GM12878 (cell line): ENCODE measurements at regions of chr1 and their contacts with region 1.

Region 1: GRCh38 chr1:15847100-15847892 is at the start of gene SPEN:
- DNase-seq: peak; percentile 82
- ATAC-seq: peak; percentile 80
- H3K4me3 ChIP-seq: peak within 1 kb of the TSS; percentile 94
- H3K27ac ChIP-seq: peak within 1 kb of the TSS; percentile 87
- H3K4me1 ChIP-seq: peaks cover 4% of the 10 kb centered on the region
- H3K27me3 ChIP-seq: no peaks in the 10 kb centered on the region
- CTCF ChIP-seq: 0 out of 6 replicates have a peak, but pooled peaks of 1 of the 3 experiments have one; percentile 4
- EP300 ChIP-seq: no peak
- POLR2A ChIP-seq: peak; percentile 83
- RAD21 ChIP-seq: no peak
- polyA plus RNA-seq, gene SPEN: 5.2 to 12.9 TPM

Region 2: GRCh38 chr1:15526490-15527339 is 320.6 kb before region 1 on chr1 and contains the start of gene DNAJC16:
- CTCF ChIA-PET with region 1: no interaction called
- POLR2A ChIA-PET with region 1: no interaction called
- RAD21 ChIA-PET with region 1: interaction called, 4 read pairs
- SMC1A ChIA-PET with region 1: no interaction called
- in situ Hi-C with region 1: no loop called
- intact Hi-C with region 1: loop called (anchors 10 kb)
- DNase-seq: peak; percentile 100
- ATAC-seq: peak; percentile 70
- H3K4me3 ChIP-seq: peak within 1 kb of the TSS; percentile 93
- H3K27ac ChIP-seq: peak within 1 kb of the TSS; percentile 65
- H3K4me1 ChIP-seq: peaks cover 9% of the 10 kb centered on the region; the same call in 1 of the 2 replicates
- H3K27me3 ChIP-seq: no peaks in the 10 kb centered on the region
- CTCF ChIP-seq: peak in 2 of 3 experiments; percentile 9 to 39; a peak in 2 of 6 replicates
- EP300 ChIP-seq: peak in 1 of 2 experiments; percentile 24; a peak in 1 of 4 replicates
- POLR2A ChIP-seq: peak; percentile 83
- RAD21 ChIP-seq: no peak
- polyA plus RNA-seq, gene DNAJC16: 2.4 to 4.4 TPM

Region 3: GRCh38 chr1:15765495-15766194 is 81.7 kb before region 1 on chr1:
- CTCF ChIA-PET with region 1: no interaction called
- POLR2A ChIA-PET with region 1: no interaction called
- RAD21 ChIA-PET with region 1: no interaction called
- SMC1A ChIA-PET with region 1: no interaction called
- in situ Hi-C with region 1: no loop called
- intact Hi-C with region 1: no loop called
- DNase-seq: no peak
- ATAC-seq: no peak; the same call in none of the 3 replicates
- H3K4me3 ChIP-seq: no peak overlapping the region
- H3K27ac ChIP-seq: no peak overlapping the region
- H3K4me1 ChIP-seq: no peaks in the 10 kb centered on the region
- H3K27me3 ChIP-seq: no peaks in the 10 kb centered on the region; a peak in 2 of 4 replicates
- CTCF ChIP-seq: no peak
- EP300 ChIP-seq: no peak
- POLR2A ChIP-seq: no peak
- RAD21 ChIP-seq: no peak

Region 4: GRCh38 chr1:15835741-15836510 is 11.4 kb before region 1 on chr1:
- CTCF ChIA-PET with region 1: interaction called, 8 read pairs
- POLR2A ChIA-PET with region 1: interaction called, 75 read pairs
- RAD21 ChIA-PET with region 1: interaction called, 55 read pairs
- SMC1A ChIA-PET with region 1: interaction called, 27 read pairs
- in situ Hi-C with region 1: no loop called
- intact Hi-C with region 1: loop called (anchors 1 kb)
- DNase-seq: peak; percentile 96
- ATAC-seq: peak; percentile 64
- H3K4me3 ChIP-seq: peak overlapping the region; percentile 87
- H3K27ac ChIP-seq: peak overlapping the region; percentile 100
- H3K4me1 ChIP-seq: peaks cover 25% of the 10 kb centered on the region
- H3K27me3 ChIP-seq: no peaks in the 10 kb centered on the region
- CTCF ChIP-seq: no peak
- EP300 ChIP-seq: no peak
- POLR2A ChIP-seq: peak; percentile 87
- RAD21 ChIP-seq: no peak

Region 5: DNA sequence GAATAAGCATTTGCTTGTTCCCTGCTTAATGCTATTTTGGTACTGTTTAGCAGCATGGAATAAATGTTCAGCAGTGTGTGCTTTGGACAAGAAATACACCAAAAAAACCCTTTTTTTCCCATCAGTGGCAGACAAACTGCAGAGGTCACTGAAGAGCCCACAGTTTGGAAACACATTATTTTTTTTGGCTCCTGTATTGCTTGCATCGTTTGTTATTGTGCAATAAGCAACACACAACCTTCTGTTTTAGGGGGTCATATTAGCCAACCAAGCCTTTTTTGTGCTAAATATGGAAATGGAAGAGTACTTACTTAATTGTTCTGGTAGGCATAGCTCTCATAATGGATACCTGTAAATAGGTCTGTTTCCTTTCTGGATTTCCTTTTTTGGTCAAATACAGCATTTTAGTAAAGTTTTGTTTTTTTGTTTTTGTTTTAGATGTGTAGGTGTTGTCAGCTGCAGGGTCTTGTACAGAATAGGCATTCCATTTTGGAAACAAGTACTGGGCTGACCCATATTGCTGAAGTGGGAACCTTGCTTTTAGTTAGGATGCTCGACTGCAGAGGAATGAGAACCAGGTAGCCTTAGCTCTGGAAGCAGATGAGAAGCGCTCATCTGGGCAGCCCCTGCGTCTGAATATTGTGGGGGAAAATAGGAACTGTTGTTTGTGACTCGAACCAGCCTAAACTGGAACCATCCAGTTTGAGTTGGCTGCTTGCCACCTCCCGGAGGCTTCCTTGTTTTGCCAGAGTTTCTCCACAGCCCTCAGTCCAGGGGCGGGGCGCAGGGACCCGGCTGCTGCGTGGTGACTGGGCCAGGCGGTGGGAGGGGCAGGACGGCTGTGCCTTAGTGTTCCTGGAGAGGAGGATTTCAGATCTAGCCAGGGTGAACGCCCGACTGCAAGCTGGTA is 38.7 kb after region 1 on chr1:
- CTCF ChIA-PET with region 1: interaction called, 3 read pairs
- POLR2A ChIA-PET with region 1: interaction called, 5 read pairs
- RAD21 ChIA-PET with region 1: interaction called, 7 read pairs
- SMC1A ChIA-PET with region 1: interaction called, 11 read pairs
- in situ Hi-C with region 1: no loop called
- intact Hi-C with region 1: no loop called
- DNase-seq: peak; percentile 36
- ATAC-seq: peak; percentile 65
- H3K4me3 ChIP-seq: peak overlapping the region; percentile 46; the same call in 1 of the 2 replicates
- H3K27ac ChIP-seq: peak overlapping the region; percentile 87
- H3K4me1 ChIP-seq: peaks cover 24% of the 10 kb centered on the region
- H3K27me3 ChIP-seq: no peaks in the 10 kb centered on the region
- CTCF ChIP-seq: no peak
- EP300 ChIP-seq: no peak
- POLR2A ChIP-seq: peak; percentile 37; the same call in 1 of the 2 replicates
- RAD21 ChIP-seq: no peak

Region 6: DNA sequence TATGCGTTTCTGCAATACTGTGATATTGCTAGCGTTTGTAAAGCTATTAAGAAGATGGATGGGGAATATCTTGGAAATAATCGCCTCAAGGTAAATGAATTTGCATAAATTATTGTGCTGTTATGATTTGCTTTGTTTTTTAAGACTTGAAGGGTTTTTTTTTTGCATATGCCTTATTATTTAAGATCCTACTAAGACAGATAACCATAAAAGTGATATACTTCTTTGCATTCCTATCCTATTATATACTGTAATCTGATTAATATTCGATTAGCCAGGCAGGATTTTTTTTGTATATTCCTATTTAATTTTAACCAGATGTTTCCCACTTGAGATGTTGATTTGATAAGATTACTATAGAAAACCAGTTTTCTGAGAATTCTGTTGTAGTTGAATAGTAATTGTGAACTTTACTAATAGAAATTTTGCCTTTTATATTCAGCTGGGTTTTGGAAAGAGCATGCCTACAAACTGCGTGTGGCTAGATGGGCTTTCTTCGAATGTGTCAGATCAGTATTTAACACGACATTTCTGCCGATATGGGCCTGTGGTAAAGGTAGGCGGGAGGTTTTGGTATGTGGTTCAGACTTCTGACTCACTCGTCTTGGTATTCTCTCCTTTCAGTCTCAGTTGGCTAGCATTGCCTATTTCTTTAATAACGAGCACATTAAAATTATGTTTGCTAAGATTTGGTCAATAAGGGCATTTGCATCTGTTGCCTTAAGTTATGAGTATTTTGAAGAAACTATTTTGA is 71.8 kb after region 1 on chr1:
- CTCF ChIA-PET with region 1: no interaction called
- POLR2A ChIA-PET with region 1: no interaction called
- RAD21 ChIA-PET with region 1: interaction called, 6 read pairs
- SMC1A ChIA-PET with region 1: interaction called, 15 read pairs
- in situ Hi-C with region 1: no loop called
- intact Hi-C with region 1: loop called (anchors 2 kb)
- DNase-seq: peak; percentile 70
- ATAC-seq: peak; percentile 93
- H3K4me3 ChIP-seq: no peak overlapping the region
- H3K27ac ChIP-seq: no peak overlapping the region
- H3K4me1 ChIP-seq: peaks cover 33% of the 10 kb centered on the region
- H3K27me3 ChIP-seq: no peaks in the 10 kb centered on the region
- CTCF ChIP-seq: no peak
- EP300 ChIP-seq: peak in 1 of 2 experiments; percentile 75; a peak in 1 of 4 replicates
- POLR2A ChIP-seq: no peak
- RAD21 ChIP-seq: no peak

Region 7: GRCh38 chr1:15966081-15966955 is 119.0 kb after region 1 on chr1:
- CTCF ChIA-PET with region 1: interaction called, 3 read pairs
- POLR2A ChIA-PET with region 1: interaction called, 6 read pairs
- RAD21 ChIA-PET with region 1: interaction called, 22 read pairs
- SMC1A ChIA-PET with region 1: interaction called, 6 read pairs
- in situ Hi-C with region 1: no loop called
- intact Hi-C with region 1: loop called (anchors 5 kb)
- DNase-seq: peak; percentile 94
- ATAC-seq: peak; percentile 80
- H3K4me3 ChIP-seq: peak overlapping the region; percentile 43; the same call in 1 of the 2 replicates
- H3K27ac ChIP-seq: peak overlapping the region; percentile 87
- H3K4me1 ChIP-seq: peaks cover 55% of the 10 kb centered on the region
- H3K27me3 ChIP-seq: no peaks in the 10 kb centered on the region
- CTCF ChIP-seq: no peak
- EP300 ChIP-seq: peak; percentile 85 to 93
- POLR2A ChIP-seq: no peak
- RAD21 ChIP-seq: no peak; the same call in 1 of the 2 replicates

Region 8: GRCh38 chr1:15975805-15976680 is 128.7 kb after region 1 on chr1 and contains the start of gene ZBTB17:
- CTCF ChIA-PET with region 1: interaction called, 4 read pairs
- POLR2A ChIA-PET with region 1: interaction called, 22 read pairs
- RAD21 ChIA-PET with region 1: interaction called, 29 read pairs
- SMC1A ChIA-PET with region 1: interaction called, 4 read pairs
- in situ Hi-C with region 1: no loop called
- intact Hi-C with region 1: no loop called
- DNase-seq: peak; percentile 79
- ATAC-seq: peak; percentile 82
- H3K4me3 ChIP-seq: peak within 1 kb of the TSS; percentile 95
- H3K27ac ChIP-seq: peak within 1 kb of the TSS; percentile 80
- H3K4me1 ChIP-seq: peaks cover 4% of the 10 kb centered on the region
- H3K27me3 ChIP-seq: no peaks in the 10 kb centered on the region
- CTCF ChIP-seq: no peak
- EP300 ChIP-seq: no peak
- POLR2A ChIP-seq: peak; percentile 78
- RAD21 ChIP-seq: no peak
- polyA plus RNA-seq, gene ZBTB17: 0.87 to 4.3 TPM